ENCODE measurements at regions of chr5 and their contacts with region 1.

Region 1: DNA sequence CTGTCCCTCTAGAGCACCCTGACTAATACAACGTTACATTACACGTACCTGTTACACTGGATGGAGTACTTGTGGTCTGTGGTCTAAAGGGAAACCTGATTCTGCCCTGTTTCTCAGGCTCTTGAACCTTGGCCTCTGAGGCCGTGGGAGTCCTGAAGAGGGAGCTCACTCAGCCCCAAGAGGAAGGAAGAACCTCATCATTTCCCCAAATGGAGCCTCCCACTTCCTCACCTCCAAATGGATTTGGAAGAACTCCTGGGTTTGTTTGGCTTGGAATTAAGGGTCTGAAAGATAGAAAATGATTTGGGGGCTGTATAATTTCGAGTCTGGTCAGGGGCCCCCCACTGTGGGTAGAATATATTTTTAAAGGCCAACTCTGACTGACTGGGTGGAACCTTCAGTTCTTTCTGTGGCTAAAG is 200.2 kb downstream of the SEMA6A start:
- DNase-seq: peak; percentile 64
- ATAC-seq: peak; percentile 82
- H3K4me3 ChIP-seq: no peak overlapping the region
- H3K27ac ChIP-seq: no peak overlapping the region
- H3K4me1 ChIP-seq: peaks cover 7% of the 10 kb centered on the region
- H3K27me3 ChIP-seq: no peaks in the 10 kb centered on the region
- CTCF ChIP-seq: no peak
- EP300 ChIP-seq: 0 out of 4 replicates have a peak, but pooled peaks of 1 of the 2 experiments have one; percentile 22
- POLR2A ChIP-seq: no peak
- RAD21 ChIP-seq: no peak

Region 2: DNA sequence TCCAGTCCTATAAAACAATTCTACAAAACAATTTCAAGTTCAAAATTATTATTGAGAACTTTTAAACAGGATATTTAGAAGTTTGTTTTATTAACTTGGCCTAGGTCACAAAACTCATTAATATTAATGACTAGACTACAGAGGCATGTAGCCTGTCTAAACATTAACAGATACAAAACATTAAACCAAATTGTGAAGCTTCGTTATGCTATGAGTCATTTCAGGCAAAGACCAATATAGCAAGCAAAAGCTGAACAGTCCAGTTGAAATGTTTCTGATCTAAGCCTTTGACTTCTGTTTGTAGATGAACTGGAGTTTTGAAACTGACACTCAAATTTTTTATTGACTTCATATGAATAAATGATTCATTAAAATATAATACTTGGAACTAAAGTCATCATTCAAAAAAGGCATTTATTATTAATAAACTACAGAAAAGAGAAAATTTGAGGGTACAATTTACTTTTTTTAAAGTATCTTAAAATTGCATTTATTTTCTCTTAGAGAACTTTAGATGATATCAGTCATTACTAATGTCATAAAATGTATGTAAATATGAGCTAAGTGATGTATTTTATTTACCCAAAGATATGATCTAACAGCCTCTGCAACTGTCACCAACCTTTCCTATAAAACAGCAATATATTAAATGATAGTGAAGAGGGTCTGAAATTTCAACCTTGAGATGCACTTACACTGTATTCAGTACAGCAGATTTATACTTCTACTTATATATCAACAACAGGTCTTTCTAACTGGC is 100.8 kb before region 1 on chr5:
- CTCF ChIA-PET with region 1: interaction called, 6 read pairs
- POLR2A ChIA-PET with region 1: no interaction called
- RAD21 ChIA-PET with region 1: interaction called, 29 read pairs
- SMC1A ChIA-PET with region 1: interaction called, 6 read pairs
- in situ Hi-C with region 1: no loop called
- intact Hi-C with region 1: no loop called
- DNase-seq: peak; percentile 43
- ATAC-seq: peak; percentile 90
- H3K4me3 ChIP-seq: no peak overlapping the region
- H3K27ac ChIP-seq: no peak overlapping the region
- H3K4me1 ChIP-seq: no peaks in the 10 kb centered on the region
- H3K27me3 ChIP-seq: no peaks in the 10 kb centered on the region
- CTCF ChIP-seq: no peak
- EP300 ChIP-seq: peak; percentile 36 to 68; a peak in 1 of 4 replicates
- POLR2A ChIP-seq: no peak
- RAD21 ChIP-seq: no peak

Region 3: GRCh38 chr5:116442095-116442534 is 67.7 kb after region 1 on chr5:
- CTCF ChIA-PET with region 1: interaction called, 5 read pairs
- POLR2A ChIA-PET with region 1: interaction called, 4 read pairs
- RAD21 ChIA-PET with region 1: interaction called, 7 read pairs
- SMC1A ChIA-PET with region 1: interaction called, 15 read pairs
- in situ Hi-C with region 1: no loop called
- intact Hi-C with region 1: no loop called
- DNase-seq: no peak
- ATAC-seq: no peak
- H3K4me3 ChIP-seq: no peak overlapping the region
- H3K27ac ChIP-seq: no peak overlapping the region
- H3K4me1 ChIP-seq: peaks cover 4% of the 10 kb centered on the region; the same call in 1 of the 2 replicates
- H3K27me3 ChIP-seq: no peaks in the 10 kb centered on the region
- CTCF ChIP-seq: no peak
- EP300 ChIP-seq: no peak
- POLR2A ChIP-seq: no peak
- RAD21 ChIP-seq: no peak

Measured in GM12878 (cell line).